Heart left ventricle (tissue), 16 donors: ENCODE measurements at regions of chr4 and their contacts with region 1.

Region 1: DNA sequence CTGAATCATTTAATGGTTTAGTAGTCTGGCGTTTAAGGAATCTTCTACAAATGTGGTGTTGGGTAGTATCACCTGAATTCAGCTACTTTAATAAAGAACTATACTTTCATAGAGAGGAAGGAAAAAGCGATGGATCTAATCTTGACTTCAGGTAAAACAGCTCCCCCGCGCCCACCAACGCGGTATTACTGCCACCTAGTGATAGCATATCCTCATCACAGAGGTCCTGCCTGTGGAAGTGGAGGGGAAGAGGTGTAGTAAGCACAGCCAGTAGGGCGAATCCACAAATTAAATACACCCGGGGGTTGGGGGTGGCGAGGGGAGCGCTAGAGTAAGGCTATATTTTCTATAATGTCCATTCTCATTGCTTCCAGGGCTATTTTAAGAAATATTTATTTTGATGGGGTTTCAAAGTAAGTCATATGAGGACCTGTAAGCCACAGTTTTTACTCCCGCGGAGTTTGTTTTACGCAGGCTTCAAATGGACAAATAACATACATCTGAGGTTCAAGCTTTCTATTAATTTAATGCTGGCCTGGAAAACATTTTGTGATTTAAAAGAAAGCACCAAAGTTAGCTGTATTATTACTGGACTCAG is 8.3 kb upstream of the DAPP1 start:
- DNase-seq: peak in 4 of 5 donors; percentile 38 to 66 (median 54)
- ATAC-seq: peak; percentile 57 to 84 (median 73)
- H3K4me3 ChIP-seq: no peak overlapping the region
- H3K27ac ChIP-seq: peak overlapping the region in 1 of 12 donors; percentile 14
- H3K4me1 ChIP-seq: peaks cover 0 to 12% (median 0%) of the 10 kb centered on the region in 12 donors
- H3K27me3 ChIP-seq: no peaks in the 10 kb centered on the region
- CTCF ChIP-seq: peak; percentile 38 to 71 (median 62)
- POLR2A ChIP-seq: no peak

Region 2: DNA sequence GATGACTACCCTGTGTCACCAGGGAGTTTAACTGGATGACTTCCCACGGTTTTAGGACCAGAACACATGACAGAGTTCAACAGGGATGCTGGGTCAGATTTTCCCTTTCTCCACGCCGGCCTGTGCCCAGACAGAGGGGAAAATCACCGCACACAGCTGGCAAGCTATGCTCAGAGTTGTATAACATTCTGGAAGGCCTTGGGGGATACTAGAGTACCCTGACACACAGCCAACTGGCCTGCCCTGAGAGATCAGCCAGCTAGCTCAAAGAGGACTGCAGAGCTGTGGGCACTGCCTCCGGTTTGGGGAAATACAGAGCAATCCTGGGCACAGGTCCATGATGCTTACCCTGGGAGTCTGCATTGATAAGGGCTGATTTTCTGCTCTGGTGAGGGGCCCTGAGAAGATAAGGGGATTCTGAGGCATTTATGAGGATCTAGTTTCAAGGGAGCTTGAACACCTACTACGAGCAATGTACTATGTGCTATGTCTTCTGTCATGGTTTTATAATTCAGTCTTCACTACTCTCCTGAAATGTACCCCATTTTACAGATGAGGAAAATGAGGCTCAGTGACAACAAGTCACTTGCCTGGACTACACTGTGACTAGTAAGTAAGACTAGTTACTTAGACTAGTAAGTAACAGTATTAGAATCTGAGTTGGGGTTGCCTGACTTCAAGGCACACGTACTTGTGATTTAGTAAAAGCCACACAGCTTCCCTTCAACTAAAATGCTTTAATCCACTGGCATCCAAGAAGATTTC is 165.5 kb before region 1 on chr4:
- intact Hi-C with region 1: loop called in 3 of 10 experiments (anchors 10 kb)
- DNase-seq: peak; percentile 74 to 89 (median 76)
- ATAC-seq: peak; percentile 96 to 99 (median 98)
- H3K4me3 ChIP-seq: no peak overlapping the region
- H3K27ac ChIP-seq: peak overlapping the region; percentile 4 to 69 (median 46)
- H3K4me1 ChIP-seq: peaks cover 0 to 23% (median 3%) of the 10 kb centered on the region in 12 donors
- H3K27me3 ChIP-seq: no peaks in the 10 kb centered on the region
- CTCF ChIP-seq: no peak
- POLR2A ChIP-seq: no peak

Region 3: GRCh38 chr4:99723612-99724011 is 84.7 kb before region 1 on chr4:
- intact Hi-C with region 1: loop called in 7 of 10 experiments (anchors 2 to 10 kb)
- DNase-seq: peak in 4 of 5 donors; percentile 55 to 78 (median 67)
- ATAC-seq: peak; percentile 78 to 99 (median 96)
- H3K4me3 ChIP-seq: no peak overlapping the region
- H3K27ac ChIP-seq: peak overlapping the region in 11 of 12 donors; percentile 1 to 77 (median 64)
- H3K4me1 ChIP-seq: peaks cover 0 to 27% (median 14%) of the 10 kb centered on the region in 12 donors
- H3K27me3 ChIP-seq: no peaks in the 10 kb centered on the region
- CTCF ChIP-seq: no peak
- POLR2A ChIP-seq: no peak

Region 4: GRCh38 chr4:99729186-99729585 is 79.2 kb before region 1 on chr4:
- intact Hi-C with region 1: loop called in 6 of 10 experiments (anchors 5 to 10 kb)
- DNase-seq: no peak
- ATAC-seq: no peak
- H3K4me3 ChIP-seq: no peak overlapping the region
- H3K27ac ChIP-seq: no peak overlapping the region
- H3K4me1 ChIP-seq: peaks cover 0 to 4% (median 0%) of the 10 kb centered on the region in 12 donors
- H3K27me3 ChIP-seq: no peaks in the 10 kb centered on the region
- CTCF ChIP-seq: no peak
- POLR2A ChIP-seq: no peak

Region 5: GRCh38 chr4:99827454-99827853 is 19.1 kb after region 1 on chr4:
- intact Hi-C with region 1: no loop called
- DNase-seq: no peak
- ATAC-seq: no peak
- H3K4me3 ChIP-seq: no peak overlapping the region
- H3K27ac ChIP-seq: no peak overlapping the region
- H3K4me1 ChIP-seq: peaks cover 0 to 17% (median 0%) of the 10 kb centered on the region in 12 donors
- H3K27me3 ChIP-seq: no peaks in the 10 kb centered on the region
- CTCF ChIP-seq: no peak
- POLR2A ChIP-seq: no peak

Region 6: GRCh38 chr4:99875072-99875471 is 66.7 kb after region 1 on chr4:
- intact Hi-C with region 1: loop called in 4 of 10 experiments (anchors 5 to 10 kb)
- DNase-seq: no peak
- ATAC-seq: no peak
- H3K4me3 ChIP-seq: no peak overlapping the region
- H3K27ac ChIP-seq: no peak overlapping the region
- H3K4me1 ChIP-seq: no peaks in the 10 kb centered on the region
- H3K27me3 ChIP-seq: no peaks in the 10 kb centered on the region
- CTCF ChIP-seq: no peak
- POLR2A ChIP-seq: no peak

Region 7: GRCh38 chr4:99885063-99885664 is 76.8 kb after region 1 on chr4:
- intact Hi-C with region 1: loop called in 5 of 10 experiments (anchors 5 to 10 kb)
- DNase-seq: no peak
- ATAC-seq: no peak
- H3K4me3 ChIP-seq: no peak overlapping the region
- H3K27ac ChIP-seq: no peak overlapping the region
- H3K4me1 ChIP-seq: peaks cover 0 to 10% (median under 1%) of the 10 kb centered on the region in 12 donors
- H3K27me3 ChIP-seq: no peaks in the 10 kb centered on the region
- CTCF ChIP-seq: peak; percentile 23 to 58 (median 40)
- POLR2A ChIP-seq: no peak

Region 8: GRCh38 chr4:99949034-99949998 is 141.0 kb after region 1 on chr4:
- intact Hi-C with region 1: loop called in 5 of 10 experiments (anchors 5 to 10 kb)
- DNase-seq: peak; percentile 84 to 90 (median 86)
- ATAC-seq: peak; percentile 14 to 48 (median 33)
- H3K4me3 ChIP-seq: peak overlapping the region; percentile 68 to 97 (median 85)
- H3K27ac ChIP-seq: peak overlapping the region; percentile 31 to 96 (median 88)
- H3K4me1 ChIP-seq: peaks cover 0 to 47% (median 33%) of the 10 kb centered on the region in 12 donors
- H3K27me3 ChIP-seq: no peaks in the 10 kb centered on the region
- CTCF ChIP-seq: peak; percentile 70 to 92 (median 84)
- POLR2A ChIP-seq: no peak